GM10248 (cell line): ENCODE measurements at regions of chr2 and their contacts with region 1.

Region 1: GRCh38 chr2:233443468-233444183 is 89.3 kb downstream of the DGKD start:
- DNase-seq: peak; percentile 89
- CTCF ChIP-seq: peak; percentile 63

Region 2: DNA sequence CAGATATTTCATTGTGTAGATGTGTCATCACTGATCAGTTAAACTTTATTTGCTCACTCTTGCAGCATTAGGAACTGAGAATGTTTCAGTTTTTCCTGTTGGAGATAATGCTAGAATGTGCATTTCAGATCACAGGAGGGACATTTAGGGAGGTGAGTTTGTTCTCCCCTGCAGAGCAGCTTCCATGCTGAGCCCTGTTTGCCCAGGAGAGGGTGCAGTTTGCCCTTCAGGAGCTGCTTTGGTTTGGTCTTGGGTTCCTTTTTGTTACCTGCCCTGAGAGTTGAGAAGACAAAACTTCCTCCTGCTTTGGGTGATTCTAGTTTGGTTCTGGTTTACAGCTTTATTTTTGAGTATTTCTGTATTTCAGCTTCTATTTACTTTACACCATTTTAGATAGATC is 39.4 kb before region 1 on chr2:
- CTCF ChIA-PET with region 1: interaction called, 138 read pairs
- POLR2A ChIA-PET with region 1: no interaction called
- DNase-seq: peak; percentile 65
- CTCF ChIP-seq: peak; percentile 68

Region 3: GRCh38 chr2:233418761-233419625 is 24.6 kb before region 1 on chr2:
- CTCF ChIA-PET with region 1: interaction called, 45 read pairs
- POLR2A ChIA-PET with region 1: no interaction called
- DNase-seq: peak; percentile 67
- CTCF ChIP-seq: no peak

Region 4: GRCh38 chr2:233426619-233427342 is 16.8 kb before region 1 on chr2:
- CTCF ChIA-PET with region 1: interaction called, 45 read pairs
- POLR2A ChIA-PET with region 1: no interaction called
- DNase-seq: no peak
- CTCF ChIP-seq: no peak

Region 5: DNA sequence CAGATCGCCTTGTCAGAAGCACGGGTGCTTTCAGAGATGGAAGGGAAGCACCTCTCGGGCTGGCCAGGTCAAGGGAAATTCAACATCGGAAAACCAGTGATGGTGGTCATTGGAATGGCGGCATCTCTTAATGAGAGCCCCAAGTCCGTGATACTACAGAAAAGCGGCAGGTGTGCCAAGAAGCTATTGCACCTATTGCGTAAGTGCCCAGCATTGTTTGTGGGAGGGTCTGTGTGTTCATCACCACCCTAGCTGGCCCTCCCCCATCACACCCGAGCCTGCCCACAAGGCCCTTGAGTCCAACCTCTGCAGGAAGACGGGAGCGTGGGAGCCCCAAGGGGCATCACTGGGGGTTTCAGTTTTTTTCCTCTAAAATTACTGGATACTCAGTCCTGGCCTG is 11.4 kb after region 1 on chr2:
- CTCF ChIA-PET with region 1: interaction called, 24 read pairs
- POLR2A ChIA-PET with region 1: no interaction called
- DNase-seq: no peak
- CTCF ChIP-seq: no peak

Region 6: DNA sequence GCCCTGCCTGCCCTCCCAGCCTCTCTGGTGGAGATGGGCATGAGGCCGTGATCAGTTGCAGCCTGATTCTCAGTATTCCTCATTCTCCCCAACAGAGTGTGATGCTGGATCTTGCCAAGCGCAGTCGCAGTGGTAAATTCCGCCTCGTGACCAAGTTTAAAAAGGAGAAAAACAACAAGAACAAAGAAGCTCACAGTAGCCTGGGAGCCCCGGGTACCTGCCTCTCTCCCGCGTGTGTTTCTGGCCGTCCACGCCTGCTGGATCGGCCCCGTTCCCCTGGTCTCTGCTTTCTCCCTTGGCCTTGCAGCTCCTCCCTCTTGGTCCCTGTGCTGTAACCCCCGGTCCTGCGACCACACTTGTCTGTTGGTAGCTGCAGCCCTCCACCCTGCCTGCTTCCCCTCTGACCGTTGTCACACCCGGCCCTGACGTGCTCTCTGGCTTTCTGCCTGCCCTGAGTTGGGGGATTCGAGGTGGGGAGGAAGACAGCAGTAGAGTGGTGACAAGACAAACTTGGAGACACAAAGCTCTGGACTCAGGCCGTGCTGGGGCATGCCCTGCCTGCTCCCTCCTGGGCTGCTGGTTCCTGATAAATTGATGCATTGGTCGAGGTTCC is 23.5 kb after region 1 on chr2:
- CTCF ChIA-PET with region 1: no interaction called
- POLR2A ChIA-PET with region 1: no interaction called
- DNase-seq: no peak
- CTCF ChIP-seq: no peak